HCT116 (cell line): ENCODE measurements at regions of chr17 and their contacts with region 1.

Region 1: GRCh38 chr17:59786536-59787319 is 79.3 kb downstream of the VMP1 start:
- DNase-seq: peak; percentile 100
- ATAC-seq: peak; percentile 78
- H3K4me3 ChIP-seq: peak overlapping the region in 1 of 2 experiments; percentile 20; a peak in 2 of 4 replicates
- H3K27ac ChIP-seq: peak overlapping the region; percentile 96
- H3K4me1 ChIP-seq: peaks cover 88 to 96% of the 10 kb centered on the region in 2 experiments
- H3K27me3 ChIP-seq: no peaks in the 10 kb centered on the region
- CTCF ChIP-seq: no peak
- POLR2A ChIP-seq: no peak
- RAD21 ChIP-seq: peak; percentile 59

Region 2: GRCh38 chr17:59769891-59770290 is 16.8 kb before region 1 on chr17:
- CTCF ChIA-PET with region 1: no interaction called
- POLR2A ChIA-PET with region 1: interaction called, 28 read pairs
- RAD21 ChIA-PET with region 1: no interaction called
- intact Hi-C with region 1: no loop called
- DNase-seq: no peak
- ATAC-seq: no peak
- H3K4me3 ChIP-seq: no peak overlapping the region
- H3K27ac ChIP-seq: peak overlapping the region; percentile 52; the same call in 1 of the 2 replicates
- H3K4me1 ChIP-seq: peaks cover 44 to 72% of the 10 kb centered on the region in 2 experiments
- H3K27me3 ChIP-seq: no peaks in the 10 kb centered on the region
- CTCF ChIP-seq: no peak
- POLR2A ChIP-seq: no peak
- RAD21 ChIP-seq: no peak

Region 3: DNA sequence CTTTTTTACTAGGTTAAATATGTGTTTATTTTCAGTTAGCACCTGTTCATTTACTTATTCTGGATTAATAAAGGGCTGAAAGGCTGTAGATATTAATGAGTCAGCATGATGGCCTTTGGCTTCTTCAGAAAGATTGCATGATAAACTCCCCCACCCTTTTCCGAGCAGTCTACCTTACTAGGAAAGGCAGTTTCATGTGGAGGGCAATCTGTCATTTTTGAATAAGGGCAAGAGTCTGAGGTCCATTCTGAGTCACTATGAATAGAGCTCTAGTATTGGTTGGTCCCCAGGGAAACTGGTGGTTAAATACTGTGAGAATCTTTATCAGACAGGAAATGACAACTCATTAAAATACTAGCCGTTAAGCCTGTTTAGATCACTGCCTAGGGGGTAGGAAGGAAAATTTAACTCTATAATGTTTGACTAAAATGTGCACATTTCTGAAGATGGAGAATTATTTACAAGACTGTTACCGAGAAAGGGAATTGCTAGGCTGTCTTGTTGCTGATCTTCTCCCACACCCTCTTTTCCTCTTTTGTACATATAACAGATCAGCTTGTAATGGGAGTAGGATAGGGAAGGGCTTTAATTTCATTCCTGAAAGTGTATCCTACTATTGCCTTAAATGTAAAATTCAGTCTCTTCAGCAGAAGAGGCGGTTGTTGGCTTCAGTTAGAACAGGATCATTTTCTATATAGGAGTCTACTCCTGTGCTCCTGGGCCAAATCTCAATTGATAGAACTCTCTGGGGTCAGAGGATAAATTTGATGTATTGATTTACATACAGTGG is 42.7 kb after region 1 on chr17:
- CTCF ChIA-PET with region 1: interaction called, 3 read pairs
- POLR2A ChIA-PET with region 1: interaction called, 411 read pairs
- RAD21 ChIA-PET with region 1: interaction called in 1 of 2 experiments, 3 read pairs
- intact Hi-C with region 1: loop called (anchors 1 kb)
- DNase-seq: peak; percentile 100
- ATAC-seq: peak; percentile 89
- H3K4me3 ChIP-seq: peak overlapping the region; percentile 9 to 21
- H3K27ac ChIP-seq: peak overlapping the region; percentile 97
- H3K4me1 ChIP-seq: peaks cover 90 to 100% of the 10 kb centered on the region in 2 experiments
- H3K27me3 ChIP-seq: no peaks in the 10 kb centered on the region
- CTCF ChIP-seq: no peak
- POLR2A ChIP-seq: peak; percentile 2
- RAD21 ChIP-seq: peak; percentile 60

Region 4: DNA sequence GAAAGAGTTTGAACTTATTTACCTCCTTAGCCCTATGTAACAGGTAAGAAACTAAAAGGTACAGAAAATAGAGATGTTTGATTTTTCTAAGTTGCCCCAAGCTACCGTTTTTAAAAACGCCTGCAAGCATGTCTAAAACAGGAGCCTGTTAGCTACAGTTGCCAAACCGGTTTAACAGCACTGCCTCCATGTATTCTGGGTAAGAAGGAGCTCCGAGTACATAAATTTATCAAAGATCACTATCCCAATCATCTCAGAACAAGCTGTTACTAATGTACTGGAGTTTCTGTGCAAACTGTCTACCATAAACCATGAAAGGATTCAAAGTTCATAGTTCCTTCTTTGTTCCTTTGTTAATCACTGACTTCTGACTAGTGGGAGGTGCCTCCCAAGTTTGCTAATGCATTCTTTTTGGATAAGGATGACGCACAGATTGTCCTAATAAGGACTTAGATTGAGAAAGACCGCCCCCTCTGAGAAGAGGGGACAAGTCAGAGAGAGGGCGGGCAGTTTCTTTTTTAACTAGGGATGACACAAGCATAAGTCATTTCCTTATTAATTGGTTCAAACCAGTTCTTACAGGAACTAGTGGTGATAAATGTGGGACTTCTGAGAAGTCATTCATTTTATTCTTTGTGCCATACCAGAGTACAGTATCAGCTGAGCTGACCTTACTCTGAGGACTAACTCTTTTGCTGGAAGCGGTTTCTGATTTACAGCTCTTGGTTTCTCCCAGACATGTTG is 50.8 kb after region 1 on chr17:
- CTCF ChIA-PET with region 1: no interaction called
- POLR2A ChIA-PET with region 1: interaction called, 411 read pairs
- RAD21 ChIA-PET with region 1: interaction called in 1 of 2 experiments, 6 read pairs
- intact Hi-C with region 1: loop called (anchors 1 kb)
- DNase-seq: peak; percentile 100
- ATAC-seq: peak; percentile 81
- H3K4me3 ChIP-seq: peak overlapping the region; percentile 74 to 78
- H3K27ac ChIP-seq: peak overlapping the region; percentile 97
- H3K4me1 ChIP-seq: peaks cover 65 to 84% of the 10 kb centered on the region in 2 experiments
- H3K27me3 ChIP-seq: no peaks in the 10 kb centered on the region
- CTCF ChIP-seq: no peak
- POLR2A ChIP-seq: peak; percentile 99
- RAD21 ChIP-seq: no peak

Region 5: DNA sequence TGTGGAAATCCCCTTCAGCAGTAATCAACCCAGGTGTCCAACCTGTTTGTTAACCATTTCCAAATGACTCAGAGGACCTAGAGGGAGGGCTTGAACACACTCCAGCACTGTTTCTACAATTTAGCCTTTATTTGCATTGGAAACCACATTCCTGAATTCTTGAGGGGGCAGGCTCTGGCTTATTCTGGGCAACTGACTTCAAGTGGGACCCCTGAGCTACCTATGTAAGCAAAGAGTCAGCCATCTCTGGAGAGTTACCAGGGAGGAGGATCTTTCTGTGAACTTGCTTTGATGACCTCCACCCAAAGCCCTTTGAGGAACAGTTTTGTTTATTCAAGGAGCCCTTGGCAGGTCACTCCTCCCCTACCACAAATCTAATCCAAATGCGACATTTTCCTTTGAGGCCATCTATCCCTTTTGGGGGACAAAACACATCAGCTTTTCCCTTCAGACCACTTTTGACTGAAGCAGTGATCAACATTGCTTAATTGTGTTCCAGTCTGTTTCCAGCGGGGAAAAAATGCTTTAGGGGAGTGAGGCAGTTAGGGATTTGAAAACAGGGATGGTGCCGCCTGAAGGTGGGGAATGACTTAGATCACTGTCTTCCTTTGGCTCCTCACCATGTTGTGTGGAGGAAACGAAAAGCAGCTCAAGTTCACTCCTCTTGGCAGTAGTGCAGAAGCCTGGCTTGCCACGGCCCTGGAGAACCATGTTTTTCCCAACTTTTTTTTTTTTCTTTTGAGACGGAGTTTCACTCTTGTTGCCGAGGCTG is 59.9 kb after region 1 on chr17:
- CTCF ChIA-PET with region 1: no interaction called
- POLR2A ChIA-PET with region 1: interaction called, 411 read pairs
- RAD21 ChIA-PET with region 1: interaction called, 4 read pairs
- intact Hi-C with region 1: loop called (anchors 1 kb)
- DNase-seq: peak; percentile 94
- ATAC-seq: peak; percentile 30
- H3K4me3 ChIP-seq: peak overlapping the region; percentile 9 to 32; a peak in 3 of 4 replicates
- H3K27ac ChIP-seq: peak overlapping the region; percentile 97
- H3K4me1 ChIP-seq: peaks cover 76 to 97% of the 10 kb centered on the region in 2 experiments
- H3K27me3 ChIP-seq: no peaks in the 10 kb centered on the region
- CTCF ChIP-seq: no peak
- POLR2A ChIP-seq: no peak
- RAD21 ChIP-seq: no peak

Region 6: GRCh38 chr17:60106220-60107059 is 319.7 kb after region 1 on chr17:
- CTCF ChIA-PET with region 1: no interaction called
- POLR2A ChIA-PET with region 1: no interaction called
- RAD21 ChIA-PET with region 1: no interaction called
- intact Hi-C with region 1: no loop called
- DNase-seq: no peak
- ATAC-seq: no peak
- H3K4me3 ChIP-seq: no peak overlapping the region
- H3K27ac ChIP-seq: no peak overlapping the region
- H3K4me1 ChIP-seq: no peaks in the 10 kb centered on the region
- H3K27me3 ChIP-seq: no peaks in the 10 kb centered on the region
- CTCF ChIP-seq: no peak
- POLR2A ChIP-seq: no peak
- RAD21 ChIP-seq: no peak

Region 7: GRCh38 chr17:60554351-60554788 is 767.6 kb after region 1 on chr17:
- CTCF ChIA-PET with region 1: no interaction called
- POLR2A ChIA-PET with region 1: no interaction called
- RAD21 ChIA-PET with region 1: no interaction called
- intact Hi-C with region 1: no loop called
- DNase-seq: no peak
- ATAC-seq: no peak
- H3K4me3 ChIP-seq: no peak overlapping the region
- H3K27ac ChIP-seq: no peak overlapping the region
- H3K4me1 ChIP-seq: no peaks in the 10 kb centered on the region
- H3K27me3 ChIP-seq: no peaks in the 10 kb centered on the region
- CTCF ChIP-seq: no peak
- POLR2A ChIP-seq: no peak
- RAD21 ChIP-seq: no peak